ENCODE measurements at regions of chr6 and their contacts with region 1.

Region 1: DNA sequence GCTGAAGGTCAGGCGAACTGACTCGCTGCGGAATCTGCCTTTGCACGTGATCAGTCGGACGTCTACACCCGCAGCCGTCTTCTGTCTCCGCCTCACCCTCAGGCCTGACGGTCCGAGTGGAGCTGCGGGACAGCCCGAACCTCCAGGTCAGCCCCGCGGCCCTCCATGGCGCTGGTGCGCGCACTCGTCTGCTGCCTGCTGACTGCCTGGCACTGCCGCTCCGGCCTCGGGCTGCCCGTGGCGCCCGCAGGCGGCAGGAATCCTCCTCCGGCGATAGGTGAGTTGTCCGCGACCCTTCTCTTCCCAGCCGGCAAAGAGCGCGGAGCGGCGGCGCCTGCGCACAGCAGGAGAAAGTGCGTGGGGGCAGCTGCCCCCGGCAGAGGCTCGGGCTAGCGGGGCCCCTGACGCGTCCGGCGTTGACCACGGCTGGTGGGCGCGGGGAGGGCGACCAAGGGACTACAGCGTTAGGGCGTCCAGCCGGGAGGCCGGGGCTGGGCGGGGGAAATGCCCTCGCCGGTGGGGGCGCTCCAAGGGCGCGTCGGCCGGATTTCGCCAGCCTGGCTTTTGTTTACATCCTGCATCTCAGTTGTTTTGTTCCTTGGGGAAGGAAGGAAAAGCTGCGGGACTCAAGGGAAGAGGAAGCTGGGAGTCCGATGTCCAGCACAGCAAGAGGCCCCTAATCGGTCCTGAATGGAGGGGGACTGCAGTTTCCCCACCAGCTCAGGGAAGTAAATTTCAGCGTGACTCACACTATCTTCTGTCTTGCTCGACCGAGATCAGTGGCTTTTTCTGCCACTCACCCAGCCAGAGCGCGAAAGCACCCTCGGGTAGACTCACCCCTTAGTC is at the start of gene SMPDL3A:
- DNase-seq: peak; percentile 78 to 91
- ATAC-seq: peak; percentile 85 to 92 (median 86)
- H3K4me3 ChIP-seq: peak within 1 kb of the TSS; percentile 90
- H3K27ac ChIP-seq: peak within 1 kb of the TSS; percentile 99
- H3K4me1 ChIP-seq: peaks cover 27% of the 10 kb centered on the region
- H3K27me3 ChIP-seq: no peaks in the 10 kb centered on the region
- CTCF ChIP-seq: peak; percentile 39
- total RNA-seq, gene SMPDL3A: 15.1 to 38.4 (median 22.5) TPM

Region 2: DNA sequence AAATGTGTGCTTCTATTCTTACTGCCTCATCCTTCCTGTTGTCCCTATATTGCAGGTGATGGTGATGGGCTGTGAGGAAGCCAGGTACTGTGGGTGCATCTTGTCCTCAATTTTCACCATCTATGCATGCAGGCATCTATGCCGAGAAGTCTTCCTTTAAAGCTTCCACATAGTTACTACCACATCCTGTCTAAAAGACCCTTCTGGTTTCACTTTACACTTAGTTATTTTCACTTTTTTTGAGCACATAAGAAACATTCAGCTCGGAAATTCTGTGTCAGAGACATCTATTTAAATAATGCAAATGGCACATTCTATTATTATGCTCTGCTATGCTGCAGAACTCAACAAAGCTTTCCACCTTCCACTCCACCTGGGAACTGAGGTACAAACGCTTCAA is 38.1 kb before region 1 on chr6:
- intact Hi-C with region 1: loop called (anchors 5 kb)
- DNase-seq: no peak
- ATAC-seq: no peak
- H3K4me3 ChIP-seq: no peak overlapping the region
- H3K27ac ChIP-seq: no peak overlapping the region
- H3K4me1 ChIP-seq: peaks cover 28% of the 10 kb centered on the region
- H3K27me3 ChIP-seq: no peaks in the 10 kb centered on the region
- CTCF ChIP-seq: no peak

Measured in psoas muscle (tissue), 8 donors.